CD4-positive, alpha-beta T cell (primary cell): ENCODE measurements at regions of chr1 and their contacts with region 1.

Region 1: DNA sequence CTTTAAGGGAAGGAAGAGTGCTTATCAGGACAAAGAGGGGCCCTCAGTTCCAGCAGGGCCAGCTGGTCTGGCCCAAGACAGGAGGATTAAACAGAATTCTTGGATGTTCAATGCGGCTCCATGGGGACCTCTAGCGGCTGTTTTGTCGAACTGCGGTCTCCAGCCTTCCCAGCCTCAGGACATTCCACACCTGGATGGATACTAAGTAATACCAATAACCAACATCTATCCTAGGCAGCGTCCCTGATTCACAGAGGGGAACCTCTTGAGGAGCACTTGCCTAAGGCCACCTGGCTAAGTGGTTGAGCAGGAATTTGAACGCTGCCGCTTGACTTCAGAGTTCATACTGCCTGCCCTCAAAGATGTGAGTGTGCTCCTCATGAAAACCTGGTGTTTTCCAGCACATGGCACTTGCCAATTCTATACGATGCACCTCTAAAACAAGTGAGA is 15.5 kb upstream of the CD247 start:
- DNase-seq: peak in 13 of 14 experiments; percentile 44 to 82 (median 57)
- ATAC-seq: peak; percentile 90
- H3K4me3 ChIP-seq: no peak overlapping the region
- H3K4me3 Mint-ChIP-seq: no peak overlapping the region
- H3K27ac ChIP-seq: no peak overlapping the region
- H3K27ac Mint-ChIP-seq: no peak overlapping the region
- H3K4me1 ChIP-seq: peaks cover 7% of the 10 kb centered on the region
- H3K4me1 Mint-ChIP-seq: no peaks in the 10 kb centered on the region
- H3K27me3 ChIP-seq: no peaks in the 10 kb centered on the region
- H3K27me3 Mint-ChIP-seq: no peaks in the 10 kb centered on the region
- CTCF ChIP-seq: peak; percentile 97

Region 2: DNA sequence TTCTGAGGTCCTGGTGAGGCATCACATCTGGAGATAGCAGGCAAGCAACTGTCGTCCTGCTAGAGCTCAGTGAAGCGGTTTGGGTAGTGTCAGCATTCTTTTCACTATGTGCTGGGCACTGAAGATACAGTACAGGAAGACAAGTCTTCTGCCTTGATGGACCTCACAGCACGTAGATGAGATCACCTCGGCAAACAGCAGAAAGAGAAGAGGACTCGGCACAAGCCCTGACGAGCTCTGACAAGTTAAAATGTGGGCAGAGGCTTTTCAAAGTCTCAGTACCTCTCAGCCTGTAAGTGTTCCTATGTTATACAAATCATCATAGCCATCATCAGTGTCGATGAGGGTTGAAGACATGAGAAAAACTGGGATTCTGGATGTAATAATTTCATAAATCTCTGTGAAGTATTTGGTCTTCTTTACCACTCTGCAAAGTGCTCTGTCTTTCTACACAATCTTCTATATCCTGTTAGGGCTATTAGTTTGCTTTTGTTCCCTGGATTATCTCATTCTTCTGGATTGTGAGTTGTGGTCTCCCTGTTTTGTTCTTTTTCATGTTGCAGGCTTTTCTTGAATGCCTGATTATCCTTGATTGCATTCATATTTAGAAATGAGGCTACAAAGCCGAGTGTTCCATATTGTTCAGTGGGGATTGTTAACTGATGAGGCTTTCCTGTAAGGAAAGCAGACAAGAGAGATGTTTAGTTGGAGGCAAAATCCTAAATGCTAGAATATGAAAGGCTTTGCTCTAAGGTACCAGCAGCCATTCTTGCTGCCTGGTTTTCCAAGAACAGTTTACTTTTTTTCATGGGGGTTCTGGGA is 520.6 kb before region 1 on chr1:
- CTCF ChIA-PET with region 1: no interaction called
- POLR2A ChIA-PET with region 1: no interaction called
- intact Hi-C with region 1: no loop called
- DNase-seq: no peak
- ATAC-seq: no peak
- H3K4me3 ChIP-seq: no peak overlapping the region
- H3K4me3 Mint-ChIP-seq: no peak overlapping the region
- H3K27ac ChIP-seq: no peak overlapping the region
- H3K27ac Mint-ChIP-seq: no peak overlapping the region
- H3K4me1 ChIP-seq: no peaks in the 10 kb centered on the region
- H3K4me1 Mint-ChIP-seq: no peaks in the 10 kb centered on the region
- H3K27me3 ChIP-seq: peaks cover 0 to 3% of the 10 kb centered on the region in 2 experiments
- H3K27me3 Mint-ChIP-seq: peaks cover 13% of the 10 kb centered on the region
- CTCF ChIP-seq: no peak

Region 3: GRCh38 chr1:167401260-167401873 is 132.5 kb before region 1 on chr1:
- CTCF ChIA-PET with region 1: interaction called, 17 read pairs
- POLR2A ChIA-PET with region 1: no interaction called
- intact Hi-C with region 1: loop called (anchors 1 to 2 kb)
- DNase-seq: peak in 13 of 14 experiments; percentile 17 to 76 (median 37)
- ATAC-seq: peak; percentile 58
- H3K4me3 ChIP-seq: no peak overlapping the region
- H3K4me3 Mint-ChIP-seq: no peak overlapping the region
- H3K27ac ChIP-seq: no peak overlapping the region
- H3K27ac Mint-ChIP-seq: no peak overlapping the region
- H3K4me1 ChIP-seq: no peaks in the 10 kb centered on the region
- H3K4me1 Mint-ChIP-seq: no peaks in the 10 kb centered on the region
- H3K27me3 ChIP-seq: no peaks in the 10 kb centered on the region
- H3K27me3 Mint-ChIP-seq: no peaks in the 10 kb centered on the region
- CTCF ChIP-seq: peak; percentile 77